RWPE1 (cell line): ENCODE measurements at regions of chr6 and their contacts with region 1.

Region 1: DNA sequence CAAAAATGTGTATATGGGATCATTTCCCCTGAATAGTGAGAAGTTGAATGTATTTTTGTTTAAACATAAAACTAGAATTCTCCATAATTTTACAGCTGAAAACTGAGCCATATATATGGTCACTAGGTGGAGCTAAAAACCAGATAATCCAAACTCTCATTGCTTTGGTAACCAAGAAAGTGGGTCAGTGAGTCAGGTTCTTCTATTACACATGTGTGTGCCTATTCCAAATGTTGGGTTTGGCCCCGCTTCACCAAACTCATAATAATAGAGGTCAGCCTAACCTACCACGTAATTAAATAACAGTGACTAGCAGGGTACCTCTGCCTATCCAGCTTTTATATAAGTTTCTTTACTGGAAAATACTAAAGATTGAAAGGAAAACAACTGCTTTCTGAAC is 19.3 kb upstream of the RNGTT start:
- DNase-seq: peak; percentile 69
- H3K27ac ChIP-seq: no peak overlapping the region
- CTCF ChIP-seq: peak; percentile 74

Region 2: DNA sequence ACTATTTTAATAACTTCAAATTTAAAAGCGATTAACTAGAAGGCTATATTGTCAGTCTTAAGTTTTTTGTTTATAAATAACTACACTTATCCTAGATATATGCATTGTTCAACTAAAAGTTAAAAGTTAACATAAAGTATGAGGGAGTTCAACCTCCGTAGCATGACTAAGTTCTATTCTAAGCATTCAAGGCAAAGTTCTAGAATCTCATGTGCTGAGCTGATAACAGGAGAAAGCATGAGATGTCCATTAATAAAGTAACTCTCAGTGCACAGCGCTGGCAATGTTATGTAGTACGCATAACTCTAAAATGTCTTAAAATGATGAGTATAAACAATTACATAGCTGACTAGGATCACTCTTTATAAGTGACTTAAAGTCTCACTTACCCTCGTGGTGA is 284.1 kb before region 1 on chr6:
- CTCF ChIA-PET with region 1: no interaction called
- POLR2A ChIA-PET with region 1: no interaction called
- DNase-seq: no peak
- H3K27ac ChIP-seq: no peak overlapping the region
- CTCF ChIP-seq: no peak

Region 3: GRCh38 chr6:89080542-89081422 is 98.1 kb after region 1 on chr6 and contains the start of gene PNRC1:
- CTCF ChIA-PET with region 1: interaction called, 16 read pairs
- POLR2A ChIA-PET with region 1: no interaction called
- DNase-seq: peak; percentile 97
- H3K27ac ChIP-seq: peak within 1 kb of the TSS; percentile 97
- CTCF ChIP-seq: no peak

Region 4: GRCh38 chr6:89145787-89146646 is 163.3 kb after region 1 on chr6 and contains the start of gene PM20D2:
- CTCF ChIA-PET with region 1: interaction called, 13 read pairs
- POLR2A ChIA-PET with region 1: no interaction called
- DNase-seq: peak; percentile 72
- H3K27ac ChIP-seq: peak within 1 kb of the TSS; percentile 87
- CTCF ChIP-seq: no peak